ENCODE measurements at regions of chr10 and their contacts with region 1.

Region 1: GRCh38 chr10:133124357-133125211 is 35.4 kb upstream of the KNDC1 start:
- DNase-seq: peak in 1 of 2 donors; percentile 45
- H3K4me3 ChIP-seq: no peak overlapping the region
- H3K27ac ChIP-seq: no peak overlapping the region
- H3K4me1 ChIP-seq: no peaks in the 10 kb centered on the region
- H3K27me3 ChIP-seq: peaks cover 0 to 53% of the 10 kb centered on the region in 2 donors
- CTCF ChIP-seq: peak in 1 of 3 donors; percentile 37
- POLR2A ChIP-seq: no peak

Region 2: DNA sequence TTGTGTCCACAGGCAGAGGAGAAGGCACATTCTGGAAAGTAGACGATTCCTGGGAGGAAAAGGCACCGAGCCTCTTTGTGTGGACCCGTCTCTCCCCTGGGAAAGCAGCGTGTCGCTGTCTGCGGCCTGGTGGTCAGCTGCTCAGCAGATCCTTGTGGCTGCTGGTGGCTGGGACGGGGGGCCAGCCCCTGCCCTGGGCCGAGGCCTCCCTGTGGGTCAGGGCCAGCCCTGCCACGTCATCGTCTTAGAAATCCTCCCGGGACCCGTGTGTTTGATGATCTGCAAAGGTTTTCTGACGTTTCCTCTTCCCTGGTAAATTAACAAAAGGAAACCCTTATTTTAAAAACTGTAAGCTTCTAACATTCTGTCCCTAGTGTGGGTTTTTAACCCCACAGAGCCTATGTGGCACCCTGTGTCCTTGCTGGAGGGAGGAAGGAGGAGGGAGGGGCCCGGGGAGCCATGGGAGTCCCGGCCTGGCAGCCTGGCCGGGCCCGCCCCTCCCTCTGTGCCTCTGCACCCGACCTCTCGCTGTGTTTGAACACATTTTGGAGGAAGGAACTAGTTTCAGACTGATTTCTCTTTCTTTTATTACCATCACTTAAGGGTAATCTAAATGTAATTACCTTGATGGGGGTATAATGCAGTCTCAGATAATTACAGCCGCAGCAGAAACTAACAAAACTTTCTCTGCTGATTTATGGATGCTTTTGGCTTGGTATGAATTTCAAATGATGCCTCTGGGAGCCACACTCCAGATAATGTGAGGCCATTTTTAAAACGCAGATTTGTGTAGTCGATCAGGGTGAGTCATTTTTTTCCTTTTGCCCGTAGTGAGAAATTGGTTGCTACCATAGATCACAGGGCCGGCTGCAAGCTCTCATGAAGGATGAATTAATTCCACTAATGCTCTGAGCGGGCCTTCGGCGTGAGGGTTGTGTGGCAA is 424.2 kb before region 1 on chr10:
- intact Hi-C with region 1: loop called (anchors 5 kb)
- DNase-seq: peak in 1 of 2 donors; percentile 24
- H3K4me3 ChIP-seq: peak overlapping the region in 1 of 3 donors; percentile 10
- H3K27ac ChIP-seq: no peak overlapping the region
- H3K4me1 ChIP-seq: no peaks in the 10 kb centered on the region
- H3K27me3 ChIP-seq: no peaks in the 10 kb centered on the region
- CTCF ChIP-seq: no peak
- POLR2A ChIP-seq: no peak